Upper lobe of right lung (tissue), 1 donor: ENCODE measurements at regions of chr5 and their contacts with region 1.

Region 1: DNA sequence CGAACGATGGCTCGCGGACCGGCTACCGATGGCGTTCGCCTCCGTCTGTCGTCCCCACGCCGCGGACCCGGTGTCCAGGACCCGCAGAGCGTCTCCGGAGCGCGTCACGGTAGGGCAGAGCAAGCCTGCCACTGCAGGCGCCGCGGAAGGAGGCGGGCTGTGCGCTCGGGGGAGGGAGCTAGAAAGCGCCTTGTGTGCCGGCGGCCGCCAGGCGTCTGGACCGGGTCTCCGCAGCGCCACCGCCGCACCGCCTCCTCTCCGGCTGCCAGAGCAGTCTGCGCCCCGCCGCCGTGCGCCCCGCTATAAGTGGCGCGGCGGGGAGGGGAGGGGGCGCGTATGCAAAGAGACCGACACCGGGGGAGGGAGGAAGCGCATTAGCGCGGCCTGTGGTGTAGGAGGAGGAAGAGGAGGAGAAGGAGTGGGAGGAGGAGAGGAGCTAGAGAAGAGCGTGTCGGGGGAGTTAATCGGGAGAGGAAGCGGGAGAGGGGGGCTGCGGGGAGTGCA is at the start of gene ENC1:
- DNase-seq: peak; percentile 96
- ATAC-seq: peak; percentile 93
- H3K4me3 ChIP-seq: peak within 1 kb of the TSS; percentile 85
- H3K27ac ChIP-seq: peak within 1 kb of the TSS; percentile 93
- H3K4me1 ChIP-seq: peaks cover 38% of the 10 kb centered on the region
- H3K27me3 ChIP-seq: no peaks in the 10 kb centered on the region
- CTCF ChIP-seq: peak; percentile 57
- total RNA-seq, gene ENC1: 15.0 TPM

Region 2: DNA sequence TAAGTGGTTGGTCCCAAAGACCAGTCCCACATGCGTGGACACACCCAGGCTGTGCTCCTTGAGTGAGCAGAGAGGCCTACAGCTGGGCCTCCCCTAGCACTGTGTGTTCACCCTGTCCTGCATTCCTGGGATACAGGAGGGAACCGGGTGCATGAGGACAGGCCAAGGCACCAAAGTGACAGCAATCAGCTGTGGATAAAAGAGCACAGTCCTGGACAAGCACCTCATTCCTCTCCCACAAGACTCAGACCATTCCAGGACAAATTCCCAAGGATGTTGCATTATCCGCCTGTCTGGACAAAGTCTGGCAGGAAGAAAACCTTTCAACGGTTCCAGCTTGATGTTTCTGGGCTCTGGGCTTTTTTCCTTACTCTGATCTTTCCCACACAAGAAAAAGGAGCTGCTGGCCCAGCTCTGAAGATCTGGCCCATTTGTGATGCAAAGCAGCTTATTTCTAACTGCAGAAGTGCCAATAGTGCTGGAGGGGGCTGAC is 273.2 kb before region 1 on chr5:
- intact Hi-C with region 1: no loop called
- DNase-seq: no peak
- ATAC-seq: no peak
- H3K4me3 ChIP-seq: no peak overlapping the region
- H3K27ac ChIP-seq: no peak overlapping the region
- H3K4me1 ChIP-seq: peaks cover 5% of the 10 kb centered on the region
- H3K27me3 ChIP-seq: no peaks in the 10 kb centered on the region
- CTCF ChIP-seq: no peak

Region 3: DNA sequence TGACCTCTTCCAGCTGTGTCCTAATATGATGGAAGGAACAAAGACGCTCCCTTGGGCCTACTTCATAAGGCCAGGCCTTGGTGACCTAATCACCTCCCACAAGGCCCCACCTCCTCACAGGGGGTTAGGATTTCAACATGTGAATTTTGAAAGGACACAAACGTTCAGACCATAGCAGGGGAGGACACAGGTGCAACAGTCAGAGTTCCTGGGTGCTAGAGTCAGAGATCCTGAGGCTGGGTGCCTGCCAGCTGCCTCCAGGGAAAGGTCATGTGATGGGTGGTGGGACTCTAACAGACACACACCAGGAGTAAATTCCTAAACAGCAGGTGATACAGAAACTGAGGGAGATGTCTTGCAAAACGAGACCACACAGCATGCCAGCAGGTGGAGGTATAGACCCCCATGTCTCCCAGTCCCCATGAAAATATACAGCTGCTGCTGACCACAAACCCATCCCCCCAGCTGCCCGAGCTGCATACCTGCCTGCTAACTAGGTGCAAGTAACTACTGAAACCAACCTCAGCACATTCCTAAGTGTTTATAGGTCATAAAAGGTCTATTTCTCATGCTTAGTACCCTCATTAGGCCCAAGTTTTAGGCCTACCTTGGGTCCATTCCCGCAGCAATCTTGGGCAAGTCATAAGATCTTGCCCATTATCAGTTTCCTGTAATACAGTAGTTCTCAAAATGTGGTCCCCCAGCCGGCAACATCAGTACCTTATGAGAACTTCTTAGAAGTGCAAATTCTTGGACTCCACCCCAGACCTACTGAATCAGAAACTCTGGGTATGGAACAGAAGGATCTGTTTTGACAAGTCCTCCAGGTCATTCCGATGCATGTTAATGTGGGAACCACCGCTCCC is 245.4 kb before region 1 on chr5:
- intact Hi-C with region 1: loop called (anchors 10 kb)
- DNase-seq: no peak
- ATAC-seq: peak; percentile 37
- H3K4me3 ChIP-seq: no peak overlapping the region
- H3K27ac ChIP-seq: no peak overlapping the region
- H3K4me1 ChIP-seq: no peaks in the 10 kb centered on the region
- H3K27me3 ChIP-seq: no peaks in the 10 kb centered on the region
- CTCF ChIP-seq: no peak